ENCODE measurements at regions of chr17 and their contacts with region 1.

Region 1: GRCh38 chr17:80761110-80761871 is 216.7 kb downstream of the RPTOR start:
- DNase-seq: no peak
- ATAC-seq: no peak
- H3K4me3 ChIP-seq: no peak overlapping the region
- H3K27ac ChIP-seq: peak overlapping the region in 1 of 10 donors; percentile 10
- H3K4me1 ChIP-seq: peaks cover 0 to 48% (median 7%) of the 10 kb centered on the region in 9 donors
- H3K27me3 ChIP-seq: no peaks in the 10 kb centered on the region
- CTCF ChIP-seq: no peak

Region 2: GRCh38 chr17:80544655-80545498 is 216.4 kb before region 1 on chr17 and contains the start of gene RPTOR:
- intact Hi-C with region 1: loop called in 1 of 10 experiments (anchors 10 kb)
- DNase-seq: peak; percentile 89 to 92
- ATAC-seq: peak; percentile 97 to 100 (median 99)
- H3K4me3 ChIP-seq: peak within 1 kb of the TSS; percentile 83 to 99 (median 95)
- H3K27ac ChIP-seq: peak within 1 kb of the TSS; percentile 12 to 90 (median 80)
- H3K4me1 ChIP-seq: peaks cover 3 to 34% (median 27%) of the 10 kb centered on the region in 9 donors
- H3K27me3 ChIP-seq: peaks cover 0 to 27% (median 7%) of the 10 kb centered on the region in 7 donors
- CTCF ChIP-seq: no peak
- total RNA-seq, gene RPTOR: 21.6 to 30.3 (median 26.4) TPM